Activated CD4-positive, alpha-beta T cell treated with anti-CD3 and anti-CD28 coated beads, Interleukin-2, amount 10 ng/mL, durations not matched to agents 24 days and 14 days (primary cell): ENCODE measurements at regions of chr5 and their contacts with region 1.

Region 1: DNA sequence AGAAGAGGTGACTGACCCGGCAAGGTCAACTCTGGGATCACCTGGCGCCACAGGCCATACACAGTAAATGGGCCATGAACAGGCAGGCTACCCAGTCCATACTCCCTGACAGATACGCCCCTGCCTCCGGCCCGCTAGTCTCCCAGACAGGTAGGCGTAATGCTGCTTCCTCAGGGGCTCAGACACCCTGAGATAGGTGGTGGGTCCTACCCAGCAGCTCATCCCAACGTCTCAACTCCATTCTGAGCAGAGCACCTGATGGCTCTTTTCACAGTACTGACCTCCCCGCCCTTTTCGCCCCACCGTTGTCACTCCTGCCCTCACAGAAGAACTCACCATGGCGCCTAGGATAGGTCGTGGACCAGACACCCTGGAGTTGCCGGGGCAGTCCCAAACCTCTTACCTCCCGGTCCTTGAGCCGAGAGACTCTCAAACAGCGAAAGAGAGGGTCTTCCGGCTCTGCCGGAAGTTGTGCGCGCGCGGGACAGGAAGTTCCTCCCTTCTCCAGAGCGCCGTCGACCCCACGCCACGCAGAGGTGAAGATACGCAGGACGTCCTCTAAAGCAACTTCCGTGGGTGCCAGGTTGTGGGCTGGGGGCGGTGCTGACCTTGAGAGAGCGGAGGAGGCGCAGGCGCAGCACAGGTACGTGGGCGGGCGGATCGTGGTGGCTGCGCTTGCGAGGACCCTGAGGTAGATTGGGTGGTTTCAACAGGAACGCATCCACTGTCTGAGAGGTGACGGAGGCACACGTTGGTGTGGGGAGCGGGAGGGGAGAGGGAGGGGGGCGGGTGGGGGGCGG is at the start of gene TMEM161B:
- DNase-seq: peak; percentile 98
- H3K4me3 Mint-ChIP-seq: peak within 1 kb of the TSS; percentile 98
- H3K27ac Mint-ChIP-seq: peak within 1 kb of the TSS; percentile 98
- H3K4me1 Mint-ChIP-seq: peaks cover 43% of the 10 kb centered on the region
- H3K27me3 Mint-ChIP-seq: peaks cover 3% of the 10 kb centered on the region
- total RNA-seq, gene TMEM161B: 27.2 and 30.1 TPM in 2 replicates

Region 2: DNA sequence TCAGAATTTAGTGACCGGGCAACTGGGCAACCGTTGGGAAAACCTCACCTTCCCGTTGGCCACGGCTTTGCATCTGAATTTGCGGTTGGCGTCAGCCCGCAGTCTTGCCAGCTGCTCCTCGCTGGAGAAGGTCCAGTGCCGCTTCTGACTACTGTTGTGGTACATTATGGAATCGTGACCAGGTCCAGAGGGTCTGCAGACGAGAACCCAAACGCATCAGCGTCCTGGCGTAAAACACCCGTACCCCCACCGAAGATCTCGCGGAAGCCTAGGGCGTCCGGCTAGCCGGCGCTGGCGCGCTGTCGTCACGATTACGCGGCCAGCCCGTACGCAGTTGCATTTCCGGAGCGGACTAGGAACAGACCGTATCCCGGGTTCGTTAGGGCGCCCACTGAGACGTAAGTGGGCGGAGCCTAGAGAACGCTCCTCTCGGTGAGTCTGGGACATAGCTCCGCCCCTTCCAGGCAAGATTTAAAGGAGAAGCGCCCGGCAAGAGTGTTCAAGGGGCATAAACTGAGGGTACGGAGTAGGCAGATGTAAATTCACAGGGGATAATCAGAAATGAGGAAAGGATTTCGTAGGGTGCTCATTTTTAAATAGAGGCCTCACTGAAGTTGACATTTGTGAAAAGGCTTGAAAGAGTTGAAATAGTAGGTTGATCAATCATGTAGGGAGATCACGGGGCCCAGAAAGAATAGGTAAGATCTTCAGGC is 855.8 kb before region 1 on chr5 and contains the start of gene CCNH:
- intact Hi-C with region 1: loop called (anchors 10 kb)
- DNase-seq: peak; percentile 99
- H3K4me3 Mint-ChIP-seq: peak within 1 kb of the TSS; percentile 96
- H3K27ac Mint-ChIP-seq: peak within 1 kb of the TSS; percentile 94
- H3K4me1 Mint-ChIP-seq: peaks cover 31% of the 10 kb centered on the region
- H3K27me3 Mint-ChIP-seq: peaks cover 8% of the 10 kb centered on the region
- total RNA-seq, gene CCNH: 67.2 and 75.6 TPM in 2 replicates

Region 3: GRCh38 chr5:87829217-87829551 is 439.4 kb before region 1 on chr5:
- intact Hi-C with region 1: no loop called
- DNase-seq: no peak
- H3K4me3 Mint-ChIP-seq: no peak overlapping the region
- H3K27ac Mint-ChIP-seq: no peak overlapping the region
- H3K4me1 Mint-ChIP-seq: no peaks in the 10 kb centered on the region
- H3K27me3 Mint-ChIP-seq: no peaks in the 10 kb centered on the region

Region 4: DNA sequence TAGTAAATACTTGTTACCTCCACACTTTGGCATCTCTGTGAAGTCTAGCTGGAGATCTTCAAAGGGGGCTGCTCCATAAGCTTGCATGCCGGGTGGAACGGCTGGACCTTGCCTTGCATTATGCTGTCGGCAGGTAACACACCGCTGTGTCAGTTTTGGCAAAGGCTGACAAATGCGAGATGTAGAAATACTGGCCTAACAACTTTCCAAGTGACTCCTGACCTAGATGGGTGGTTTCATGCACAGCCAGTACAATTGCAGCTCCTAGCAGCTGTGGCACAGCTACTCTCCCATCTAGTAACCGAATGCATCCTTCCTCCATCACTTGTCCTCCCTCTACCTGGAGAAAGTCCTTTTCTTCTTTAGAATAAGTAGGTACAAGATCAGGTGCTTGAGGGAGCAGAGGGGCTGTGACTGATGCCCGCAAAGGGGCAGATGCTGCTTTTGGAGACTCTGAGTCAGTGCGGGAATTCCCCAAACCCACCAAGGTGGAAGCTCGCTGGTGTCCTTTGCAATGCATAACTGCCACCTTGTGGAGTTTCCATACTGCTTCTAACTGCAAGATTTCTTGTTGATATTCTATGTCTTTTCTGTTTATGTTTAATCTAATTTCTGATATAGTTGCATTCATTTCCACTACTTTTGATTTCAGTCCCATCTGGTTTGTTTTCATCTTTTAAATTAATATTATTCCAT is 78.3 kb before region 1 on chr5:
- intact Hi-C with region 1: no loop called
- DNase-seq: no peak
- H3K4me3 Mint-ChIP-seq: no peak overlapping the region
- H3K27ac Mint-ChIP-seq: no peak overlapping the region
- H3K4me1 Mint-ChIP-seq: no peaks in the 10 kb centered on the region
- H3K27me3 Mint-ChIP-seq: no peaks in the 10 kb centered on the region

Region 5: DNA sequence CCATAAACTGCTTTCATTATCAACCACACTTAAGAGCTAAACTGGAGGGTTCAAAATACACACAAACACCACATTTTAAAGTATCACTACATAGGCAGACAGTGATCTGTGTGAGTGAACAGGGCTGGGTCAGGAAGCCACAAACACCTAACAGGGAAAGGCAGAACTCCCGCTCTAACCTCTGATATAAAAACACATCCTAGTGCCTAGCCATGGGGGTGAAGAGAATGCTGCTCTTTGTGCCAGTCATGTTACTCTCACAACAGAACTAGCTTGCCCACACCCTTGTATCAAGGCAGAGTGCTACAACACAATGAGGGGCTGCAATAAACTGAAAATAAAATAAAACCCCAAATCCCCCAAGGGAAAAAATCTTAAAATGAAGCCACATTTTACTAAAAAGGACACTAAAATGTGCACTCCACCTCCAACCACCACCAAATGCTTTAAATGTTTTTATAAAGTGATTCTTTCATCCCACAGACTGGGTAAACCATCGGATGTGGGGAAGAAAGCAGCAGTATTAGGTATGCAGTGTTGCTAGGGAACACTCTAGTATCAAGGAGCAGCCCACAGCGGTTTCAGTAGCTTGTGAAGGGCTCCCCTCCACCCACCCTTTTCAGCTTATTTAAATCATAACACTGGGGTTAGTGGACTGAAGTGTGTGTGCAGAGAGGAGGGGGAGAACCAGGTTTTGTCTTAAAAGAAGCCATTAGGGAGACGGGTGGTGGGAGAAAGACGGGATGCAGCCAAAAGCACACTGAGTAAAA is 64.4 kb before region 1 on chr5:
- intact Hi-C with region 1: loop called (anchors 5 kb)
- DNase-seq: peak; percentile 75
- H3K4me3 Mint-ChIP-seq: peak overlapping the region; percentile 50
- H3K27ac Mint-ChIP-seq: peak overlapping the region; percentile 82
- H3K4me1 Mint-ChIP-seq: peaks cover 8% of the 10 kb centered on the region
- H3K27me3 Mint-ChIP-seq: no peaks in the 10 kb centered on the region

Region 6: DNA sequence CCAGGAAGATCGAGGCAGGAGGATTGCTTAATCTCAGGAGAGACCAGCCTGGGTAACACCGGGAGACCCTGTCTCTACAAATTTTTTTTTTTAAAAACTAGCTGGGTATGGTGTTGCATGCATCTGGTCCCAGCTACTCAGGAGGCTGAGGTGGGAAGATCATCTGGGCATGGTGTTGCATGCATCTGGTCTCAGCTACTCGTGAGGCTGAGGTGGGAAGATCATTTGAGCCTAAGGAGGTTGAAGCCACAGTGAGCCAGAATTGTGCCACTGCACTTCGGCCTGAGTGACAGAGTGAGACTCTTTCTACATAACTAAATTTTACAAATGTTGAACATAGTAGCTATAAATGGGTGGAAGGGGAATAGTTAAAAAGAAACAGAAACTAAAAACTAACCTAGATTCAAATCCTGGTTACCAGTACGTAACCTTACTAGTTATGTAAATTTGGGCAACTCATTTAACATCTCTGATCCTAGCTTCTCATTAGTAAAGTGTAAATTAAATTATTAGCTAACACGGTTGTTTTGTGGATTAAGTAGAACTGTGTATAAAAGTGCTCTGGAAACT is 41.6 kb before region 1 on chr5:
- intact Hi-C with region 1: loop called (anchors 2 kb)
- DNase-seq: no peak
- H3K4me3 Mint-ChIP-seq: no peak overlapping the region
- H3K27ac Mint-ChIP-seq: no peak overlapping the region
- H3K4me1 Mint-ChIP-seq: peaks cover 13% of the 10 kb centered on the region
- H3K27me3 Mint-ChIP-seq: no peaks in the 10 kb centered on the region

Region 7: GRCh38 chr5:88251048-88251711 is 17.4 kb before region 1 on chr5:
- intact Hi-C with region 1: loop called (anchors 1 kb)
- DNase-seq: peak; percentile 64
- H3K4me3 Mint-ChIP-seq: peak overlapping the region; percentile 10
- H3K27ac Mint-ChIP-seq: peak overlapping the region; percentile 84
- H3K4me1 Mint-ChIP-seq: peaks cover 41% of the 10 kb centered on the region
- H3K27me3 Mint-ChIP-seq: no peaks in the 10 kb centered on the region